ENCODE measurements at regions of chr11 and their contacts with region 1.

Region 1: DNA sequence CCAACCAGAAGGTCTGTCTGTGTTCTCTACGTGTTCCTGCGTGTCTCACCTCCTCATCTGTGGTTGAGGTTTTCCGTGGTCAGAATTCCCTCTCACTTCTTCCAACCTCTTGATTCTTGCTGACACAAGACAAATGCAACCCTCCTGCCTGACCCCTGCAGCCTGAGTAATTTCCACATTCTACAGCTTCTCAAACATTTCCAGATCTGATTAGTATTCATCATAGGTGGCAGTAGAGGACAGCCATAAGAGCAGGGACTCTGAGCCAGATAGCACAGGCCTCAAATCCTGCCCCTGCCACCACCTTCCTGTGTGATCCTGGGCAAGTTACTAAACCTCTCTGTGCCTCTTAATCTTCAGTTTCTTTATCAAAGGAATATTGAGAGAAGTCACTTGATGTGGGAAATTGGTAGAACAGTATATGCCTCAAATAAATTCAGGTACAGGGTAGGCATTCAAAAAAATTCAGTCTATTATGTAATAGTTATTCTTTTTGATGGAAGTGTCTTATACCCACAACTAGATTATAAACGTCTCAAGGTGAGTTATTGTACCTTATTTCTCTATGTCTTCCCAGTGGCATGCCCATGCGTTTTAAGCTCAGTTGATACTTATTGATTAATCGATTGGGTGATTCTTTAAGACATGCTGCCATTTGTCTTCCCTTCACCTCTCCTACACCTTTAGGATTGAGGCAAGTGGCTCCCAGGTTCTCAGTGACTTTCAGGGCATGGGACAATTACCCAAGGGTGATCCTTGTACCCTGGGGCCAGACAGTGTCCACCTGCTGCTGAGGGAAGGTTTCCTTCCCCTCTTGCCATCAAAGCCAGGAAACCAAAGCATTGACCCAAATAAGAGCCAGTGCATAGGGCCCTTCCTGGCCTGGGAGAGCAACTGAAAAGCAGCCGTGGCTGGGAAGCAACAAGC is 19.6 kb downstream of the POU2AF1 start:
- DNase-seq: no peak
- H3K4me3 Mint-ChIP-seq: no peak overlapping the region
- H3K27ac Mint-ChIP-seq: no peak overlapping the region
- H3K4me1 Mint-ChIP-seq: peaks cover 10% of the 10 kb centered on the region
- H3K27me3 Mint-ChIP-seq: no peaks in the 10 kb centered on the region

Region 2: GRCh38 chr11:111399187-111400031 is 39.9 kb after region 1 on chr11:
- intact Hi-C with region 1: loop called (anchors 2 kb)
- DNase-seq: no peak
- H3K4me3 Mint-ChIP-seq: no peak overlapping the region
- H3K27ac Mint-ChIP-seq: no peak overlapping the region
- H3K4me1 Mint-ChIP-seq: peaks cover 13% of the 10 kb centered on the region
- H3K27me3 Mint-ChIP-seq: no peaks in the 10 kb centered on the region

Region 3: GRCh38 chr11:111422494-111423249 is 63.2 kb after region 1 on chr11:
- intact Hi-C with region 1: loop called (anchors 1 kb)
- DNase-seq: peak; percentile 18
- H3K4me3 Mint-ChIP-seq: no peak overlapping the region
- H3K27ac Mint-ChIP-seq: no peak overlapping the region
- H3K4me1 Mint-ChIP-seq: peaks cover 11% of the 10 kb centered on the region
- H3K27me3 Mint-ChIP-seq: peaks cover 2% of the 10 kb centered on the region